A549 (cell line): ENCODE measurements at regions of chr5 and their contacts with region 1.

Region 1: GRCh38 chr5:134417707-134418106 is 6.0 kb upstream of the CDKN2AIPNL start:
- DNase-seq: no peak
- ATAC-seq: no peak
- H3K4me3 ChIP-seq: no peak overlapping the region
- H3K27ac ChIP-seq: no peak overlapping the region
- H3K4me1 ChIP-seq: peaks cover 19% of the 10 kb centered on the region
- CTCF ChIP-seq: no peak
- EP300 ChIP-seq: no peak
- POLR2A ChIP-seq: no peak
- RAD21 ChIP-seq: no peak

Region 2: GRCh38 chr5:134007581-134008256 is 410.0 kb before region 1 on chr5:
- CTCF ChIA-PET with region 1: no interaction called
- POLR2A ChIA-PET with region 1: no interaction called
- DNase-seq: peak in 1 of 2 experiments; percentile 44
- ATAC-seq: peak in 1 of 2 experiments; percentile 18; a peak in 2 of 6 replicates
- H3K4me3 ChIP-seq: no peak overlapping the region
- H3K27ac ChIP-seq: peak overlapping the region in 1 of 2 experiments; percentile 7; a peak in 2 of 6 replicates
- H3K4me1 ChIP-seq: peaks cover 26% of the 10 kb centered on the region
- CTCF ChIP-seq: no peak
- EP300 ChIP-seq: no peak
- POLR2A ChIP-seq: no peak; the same call in 1 of the 2 replicates
- RAD21 ChIP-seq: no peak

Region 3: DNA sequence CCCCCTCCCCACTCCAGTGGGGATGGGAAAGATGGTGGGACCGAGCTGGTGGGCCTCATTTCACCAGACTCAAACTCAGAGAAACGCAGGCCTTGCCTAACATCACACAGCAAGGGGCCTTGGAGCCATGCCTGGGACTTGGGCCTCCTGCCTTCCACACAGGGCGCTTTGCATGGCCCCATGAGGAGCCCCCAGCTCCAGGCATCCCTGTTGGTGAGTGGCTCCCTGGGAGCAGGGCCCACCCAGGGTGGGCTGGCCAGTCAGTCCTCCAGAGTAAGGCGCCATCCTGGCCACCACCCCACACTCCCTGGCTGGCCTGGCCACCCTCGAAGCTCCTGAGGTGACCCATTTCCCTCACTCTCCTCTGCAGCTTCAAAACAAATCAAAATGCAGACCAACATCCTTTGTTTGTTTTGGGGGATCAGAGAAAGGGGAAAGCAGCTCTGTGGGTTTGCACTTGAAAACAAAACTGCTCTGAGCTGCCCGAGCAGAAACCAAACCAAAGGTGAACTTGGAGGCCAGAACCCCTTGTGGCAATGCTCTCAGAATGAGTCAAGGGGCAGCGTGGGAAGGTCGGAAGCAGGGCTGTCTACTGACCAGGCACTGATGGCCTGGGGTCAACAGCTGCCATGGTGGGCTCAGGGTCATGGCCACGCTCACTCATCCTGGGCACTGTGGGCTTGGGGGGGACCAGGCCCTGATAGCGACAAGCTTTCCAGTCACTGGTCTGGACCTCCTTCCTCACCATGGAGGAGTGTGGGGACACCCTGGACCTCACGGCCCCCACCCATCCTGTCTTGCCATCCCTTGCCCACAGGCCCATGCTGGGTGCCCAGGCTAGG is 375.9 kb before region 1 on chr5:
- CTCF ChIA-PET with region 1: no interaction called
- POLR2A ChIA-PET with region 1: no interaction called
- DNase-seq: no peak
- ATAC-seq: no peak
- H3K4me3 ChIP-seq: no peak overlapping the region
- H3K27ac ChIP-seq: no peak overlapping the region
- H3K4me1 ChIP-seq: no peaks in the 10 kb centered on the region
- CTCF ChIP-seq: no peak
- EP300 ChIP-seq: no peak
- POLR2A ChIP-seq: no peak
- RAD21 ChIP-seq: no peak

Region 4: GRCh38 chr5:134070725-134071613 is 346.7 kb before region 1 on chr5:
- CTCF ChIA-PET with region 1: no interaction called
- POLR2A ChIA-PET with region 1: interaction called, 10 read pairs
- DNase-seq: peak; percentile 59 to 66
- ATAC-seq: peak; percentile 62 to 80
- H3K4me3 ChIP-seq: peak overlapping the region; percentile 54
- H3K27ac ChIP-seq: peak overlapping the region; percentile 64 to 90
- H3K4me1 ChIP-seq: peaks cover 8% of the 10 kb centered on the region; the same call in 2 of the 3 replicates
- CTCF ChIP-seq: peak; percentile 11; the same call in 1 of the 3 replicates
- EP300 ChIP-seq: no peak
- POLR2A ChIP-seq: no peak
- RAD21 ChIP-seq: no peak

Region 5: DNA sequence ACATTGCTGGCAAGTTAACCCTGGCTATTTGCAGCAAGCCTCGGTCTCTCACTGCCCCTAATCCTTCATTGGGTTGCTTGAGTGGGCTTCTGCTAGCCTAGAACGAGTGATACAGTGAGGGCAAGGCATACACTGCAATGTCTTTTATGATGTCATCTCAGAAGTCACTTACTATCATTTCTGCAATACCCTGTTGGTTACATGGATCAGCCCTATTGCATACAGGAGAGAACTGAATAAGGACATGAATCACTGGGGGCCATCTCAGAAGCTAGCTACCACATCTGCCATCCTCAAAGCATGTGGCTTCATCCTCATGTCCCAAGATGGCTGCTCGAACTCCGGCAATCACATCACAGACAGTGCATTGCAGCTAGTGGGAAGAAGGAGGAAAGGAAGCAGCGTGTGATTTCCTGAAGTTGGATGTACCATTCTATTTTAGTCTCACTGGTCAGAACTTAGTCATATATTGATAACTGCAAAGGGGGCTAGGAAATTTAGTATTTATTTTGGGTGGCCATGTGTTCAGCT is 27.3 kb after region 1 on chr5:
- CTCF ChIA-PET with region 1: no interaction called
- POLR2A ChIA-PET with region 1: no interaction called
- DNase-seq: no peak
- ATAC-seq: no peak
- H3K4me3 ChIP-seq: no peak overlapping the region
- H3K27ac ChIP-seq: no peak overlapping the region
- H3K4me1 ChIP-seq: peaks cover 9% of the 10 kb centered on the region; the same call in 1 of the 3 replicates
- CTCF ChIP-seq: no peak
- EP300 ChIP-seq: no peak
- POLR2A ChIP-seq: no peak
- RAD21 ChIP-seq: no peak

Region 6: DNA sequence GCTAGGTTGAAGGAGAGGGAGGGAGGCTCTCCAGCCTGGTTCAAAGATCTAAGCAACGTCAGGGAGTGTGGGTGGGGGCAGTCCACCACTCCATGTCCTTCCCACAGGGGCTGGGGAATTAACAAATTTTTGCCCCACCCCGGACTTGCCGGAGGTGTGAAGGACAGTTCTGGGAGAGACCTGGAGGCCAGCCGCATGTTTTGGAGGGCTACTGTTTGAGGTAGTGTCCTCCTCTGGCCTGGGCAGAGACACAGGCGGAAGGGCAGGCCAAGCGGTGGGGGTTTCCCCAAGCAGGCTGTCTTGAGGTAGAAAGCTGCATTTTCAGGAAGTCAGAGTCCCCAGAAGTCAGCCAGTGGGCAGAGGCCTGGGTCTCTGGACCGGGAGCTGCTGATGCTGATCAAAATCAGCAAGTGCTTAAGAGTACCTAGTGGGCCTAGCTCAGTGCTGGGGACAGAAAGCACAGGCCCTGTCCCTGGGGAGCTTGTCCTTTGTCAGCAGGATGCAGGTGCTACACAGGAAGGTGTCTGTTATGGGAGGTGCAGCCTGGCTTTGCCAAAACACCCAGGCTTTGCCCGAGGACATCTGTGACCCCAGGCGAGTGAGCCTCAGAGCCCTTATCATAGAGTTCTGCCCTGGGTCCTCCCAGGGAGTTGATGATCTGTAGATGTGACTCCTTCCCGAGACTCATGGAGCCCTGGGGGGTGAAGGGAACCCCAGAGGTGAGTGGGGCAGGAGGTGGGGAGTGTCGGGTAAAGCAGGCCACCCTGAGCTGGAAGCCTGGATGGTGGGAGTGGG is 126.3 kb after region 1 on chr5:
- CTCF ChIA-PET with region 1: no interaction called
- POLR2A ChIA-PET with region 1: no interaction called
- DNase-seq: no peak
- ATAC-seq: no peak
- H3K4me3 ChIP-seq: no peak overlapping the region
- H3K27ac ChIP-seq: no peak overlapping the region
- H3K4me1 ChIP-seq: peaks cover 16% of the 10 kb centered on the region; the same call in 2 of the 3 replicates
- CTCF ChIP-seq: no peak
- EP300 ChIP-seq: no peak
- POLR2A ChIP-seq: no peak
- RAD21 ChIP-seq: no peak